GM10248 (cell line): ENCODE measurements at regions of chr4 and their contacts with region 1.

Region 1: GRCh38 chr4:125313497-125313896 is 1.3 kb upstream of the FAT4 start:
- DNase-seq: peak; percentile 50
- CTCF ChIP-seq: peak; percentile 78

Region 2: DNA sequence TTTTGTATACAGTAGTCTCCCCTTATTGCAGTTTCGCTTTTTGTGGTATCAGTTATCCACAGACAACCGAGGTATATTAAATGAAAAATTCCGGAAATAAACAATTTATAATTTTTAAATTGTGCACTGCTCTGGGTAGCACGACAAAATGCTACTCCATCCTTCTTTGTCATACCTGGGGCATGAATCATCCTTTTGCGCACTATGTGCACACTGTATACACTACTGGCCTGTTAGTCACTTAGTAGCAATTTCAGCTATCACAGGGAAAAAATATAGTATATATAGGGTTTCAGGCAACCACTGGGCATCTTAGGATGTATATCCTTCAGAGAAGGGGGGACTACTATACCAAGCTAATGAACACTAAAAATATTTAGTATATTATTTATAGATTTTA is 197.6 kb before region 1 on chr4:
- CTCF ChIA-PET with region 1: no interaction called
- POLR2A ChIA-PET with region 1: no interaction called
- DNase-seq: no peak
- CTCF ChIP-seq: no peak

Region 3: GRCh38 chr4:125303058-125303457 is 10.4 kb before region 1 on chr4:
- CTCF ChIA-PET with region 1: interaction called, 14 read pairs
- POLR2A ChIA-PET with region 1: no interaction called
- DNase-seq: no peak
- CTCF ChIP-seq: no peak